ENCODE measurements at regions of chr12 and their contacts with region 1.

Region 1: DNA sequence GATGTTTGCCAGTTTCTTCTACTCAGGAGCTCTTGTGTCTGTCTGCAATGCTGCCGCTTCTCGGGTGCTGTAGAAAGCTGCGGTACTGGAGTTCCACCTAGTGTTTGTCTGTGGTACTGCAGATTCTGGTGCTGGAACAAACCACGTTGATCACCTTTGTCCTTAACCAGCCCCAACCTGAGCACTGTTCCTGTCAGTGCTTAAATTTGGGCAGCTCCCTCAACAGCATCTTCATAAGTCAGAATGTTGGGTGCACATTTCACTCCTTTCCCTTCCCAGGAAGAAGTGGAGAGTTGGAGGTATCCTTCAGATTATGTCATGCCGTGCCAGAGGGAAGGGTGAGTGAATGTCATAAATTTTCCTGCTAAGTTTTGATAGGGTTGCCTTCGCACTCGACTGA is 48.7 kb upstream of the LALBA start:
- DNase-seq: peak; percentile 83
- H3K4me3 Mint-ChIP-seq: no peak overlapping the region
- H3K27ac Mint-ChIP-seq: no peak overlapping the region
- H3K4me1 Mint-ChIP-seq: no peaks in the 10 kb centered on the region
- H3K27me3 Mint-ChIP-seq: peaks cover 22% of the 10 kb centered on the region

Region 2: DNA sequence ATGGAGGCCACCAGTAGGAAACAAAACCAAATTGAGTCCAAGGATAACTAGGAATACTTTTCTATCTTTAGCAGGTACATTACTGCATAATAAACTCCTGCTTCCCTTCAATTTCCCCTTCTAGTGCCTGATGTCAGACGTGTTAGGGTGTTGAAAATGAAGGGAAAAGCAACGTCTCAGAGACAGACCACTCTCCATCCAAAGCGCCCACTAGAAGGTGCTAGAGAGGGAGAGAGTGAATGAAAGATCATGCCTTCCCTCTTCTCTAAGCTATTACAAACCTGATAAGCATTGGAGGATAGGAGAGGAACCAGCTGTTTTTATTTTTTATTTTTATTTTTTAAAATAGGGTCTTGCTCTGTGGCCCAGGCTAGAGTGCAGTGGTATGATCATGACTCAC is 331.9 kb before region 1 on chr12:
- CTCF ChIA-PET with region 1: interaction called, 18 read pairs
- POLR2A ChIA-PET with region 1: no interaction called
- intact Hi-C with region 1: no loop called
- DNase-seq: peak; percentile 10
- H3K4me3 Mint-ChIP-seq: no peak overlapping the region
- H3K27ac Mint-ChIP-seq: peak overlapping the region; percentile 23
- H3K4me1 Mint-ChIP-seq: peaks cover 12% of the 10 kb centered on the region
- H3K27me3 Mint-ChIP-seq: no peaks in the 10 kb centered on the region

Region 3: DNA sequence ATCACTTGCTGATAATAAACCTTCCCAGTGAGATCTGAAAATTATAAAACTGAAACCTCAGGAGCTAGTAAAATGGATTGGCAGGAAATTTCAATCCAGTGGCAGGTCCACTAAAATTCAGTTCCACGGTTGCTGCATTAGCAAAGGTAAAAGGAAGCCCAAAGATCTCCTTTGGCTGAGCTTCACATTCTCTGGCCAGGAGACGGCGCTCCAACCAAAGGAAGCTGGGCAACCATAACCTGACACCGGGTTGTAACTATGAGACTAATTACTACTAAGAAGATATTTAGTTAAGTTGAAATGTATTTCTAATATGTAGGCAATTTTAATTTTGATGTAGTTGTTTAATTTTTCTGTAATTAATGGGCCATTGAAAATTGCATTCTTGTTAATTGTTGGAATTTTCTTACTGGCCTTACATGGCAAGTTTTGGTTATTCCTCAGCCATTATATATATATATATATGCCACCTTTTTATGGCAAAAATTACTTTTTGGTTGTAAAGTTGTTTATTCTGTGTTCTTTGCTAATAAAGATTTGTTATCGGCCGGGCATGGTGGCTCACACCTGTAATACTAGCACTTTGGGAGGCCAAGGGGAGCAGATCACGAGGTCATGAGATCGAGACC is 76.1 kb before region 1 on chr12:
- CTCF ChIA-PET with region 1: interaction called, 202 read pairs
- POLR2A ChIA-PET with region 1: no interaction called
- intact Hi-C with region 1: loop called (anchors 1 kb)
- DNase-seq: peak; percentile 75
- H3K4me3 Mint-ChIP-seq: no peak overlapping the region
- H3K27ac Mint-ChIP-seq: no peak overlapping the region
- H3K4me1 Mint-ChIP-seq: peaks cover 11% of the 10 kb centered on the region
- H3K27me3 Mint-ChIP-seq: no peaks in the 10 kb centered on the region

Region 4: DNA sequence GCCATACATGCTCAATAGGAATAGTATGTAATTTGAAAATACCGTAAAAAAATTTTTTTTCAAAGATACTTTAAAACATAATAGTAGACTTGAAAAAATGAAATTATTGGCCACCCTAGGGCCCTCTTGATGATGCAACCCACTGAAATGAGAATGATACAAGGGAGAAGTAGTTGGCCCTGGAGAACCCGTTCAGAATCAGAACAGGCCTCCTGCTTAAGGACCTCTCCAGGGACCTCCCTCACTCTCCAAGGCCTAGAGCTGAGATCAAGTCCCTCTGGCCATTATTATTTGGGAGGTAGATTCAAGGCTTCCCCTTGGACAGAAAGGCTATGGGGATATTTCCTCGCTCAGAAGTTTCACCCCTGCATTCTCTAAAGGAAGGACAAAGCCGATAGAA is 60.6 kb before region 1 on chr12:
- CTCF ChIA-PET with region 1: interaction called, 11 read pairs
- POLR2A ChIA-PET with region 1: no interaction called
- intact Hi-C with region 1: no loop called
- DNase-seq: no peak
- H3K4me3 Mint-ChIP-seq: no peak overlapping the region
- H3K27ac Mint-ChIP-seq: no peak overlapping the region
- H3K4me1 Mint-ChIP-seq: peaks cover 2% of the 10 kb centered on the region
- H3K27me3 Mint-ChIP-seq: peaks cover 16% of the 10 kb centered on the region

Region 5: DNA sequence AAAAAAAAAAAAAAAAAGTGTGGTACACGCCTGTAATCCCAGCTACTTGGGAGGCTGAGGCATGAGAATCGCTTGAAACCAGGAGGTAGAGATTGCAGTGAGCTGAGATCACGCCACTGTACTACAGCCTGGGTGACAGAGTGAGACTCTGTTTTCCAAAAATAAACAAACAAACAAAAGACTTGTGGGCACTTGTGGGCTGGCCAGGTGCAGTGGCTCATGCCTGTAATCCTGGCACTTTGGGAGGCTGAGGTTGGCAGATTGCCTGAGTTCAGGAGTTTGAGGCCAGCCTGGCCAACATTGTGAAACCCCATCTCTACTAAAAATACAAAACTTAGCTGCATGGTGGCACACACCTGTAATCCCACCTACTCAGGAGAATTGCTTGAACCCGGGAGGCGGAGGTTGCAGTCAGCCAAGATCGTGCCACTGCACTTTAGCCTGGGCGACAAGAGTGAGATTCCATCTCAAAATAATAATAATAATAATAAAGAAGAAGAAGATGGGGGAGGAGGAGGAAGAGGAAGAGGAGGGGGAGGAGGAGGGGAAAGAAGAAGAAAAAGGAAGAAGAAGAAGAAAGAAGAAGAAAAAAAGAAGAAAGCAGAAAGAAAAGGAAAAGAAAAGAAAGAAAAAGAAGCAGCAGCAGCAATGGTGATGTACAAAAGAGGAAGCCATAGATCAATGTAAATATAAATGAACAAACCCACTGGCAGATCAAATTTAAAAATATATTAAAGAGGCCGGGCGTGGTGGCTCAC is 125.9 kb after region 1 on chr12:
- CTCF ChIA-PET with region 1: no interaction called
- POLR2A ChIA-PET with region 1: no interaction called
- intact Hi-C with region 1: no loop called
- DNase-seq: no peak
- H3K4me3 Mint-ChIP-seq: no peak overlapping the region
- H3K27ac Mint-ChIP-seq: no peak overlapping the region
- H3K4me1 Mint-ChIP-seq: no peaks in the 10 kb centered on the region
- H3K27me3 Mint-ChIP-seq: peaks cover 8% of the 10 kb centered on the region